Mammary epithelial cell (primary cell): ENCODE measurements at regions of chr1 and their contacts with region 1.

Region 1: GRCh38 chr1:244536316-244536715 is 75.2 kb downstream of the CATSPERE start:
- DNase-seq: no peak
- H3K4me3 ChIP-seq: no peak overlapping the region
- H3K27ac ChIP-seq: no peak overlapping the region
- H3K4me1 ChIP-seq: no peaks in the 10 kb centered on the region
- H3K27me3 ChIP-seq: no peaks in the 10 kb centered on the region
- CTCF ChIP-seq: no peak

Region 2: GRCh38 chr1:244573768-244574167 is 37.5 kb after region 1 on chr1:
- CTCF ChIA-PET with region 1: no interaction called
- dilution Hi-C with region 1: no loop called
- in situ Hi-C with region 1: no loop called
- intact Hi-C with region 1: loop called (anchors 2 kb)
- DNase-seq: no peak
- H3K4me3 ChIP-seq: no peak overlapping the region
- H3K27ac ChIP-seq: no peak overlapping the region
- H3K4me1 ChIP-seq: no peaks in the 10 kb centered on the region
- H3K27me3 ChIP-seq: no peaks in the 10 kb centered on the region
- CTCF ChIP-seq: no peak